Ascending aorta (tissue), 2 donors: ENCODE measurements at regions of chr12 and their contacts with region 1.

Region 1: GRCh38 chr12:62683776-62684569 is 217.3 kb downstream of the MON2 start:
- DNase-seq: peak in 1 of 2 donors; percentile 78
- H3K4me3 ChIP-seq: no peak overlapping the region
- H3K27ac ChIP-seq: peak overlapping the region; percentile 79 to 85
- H3K4me1 ChIP-seq: peaks cover 6 to 23% of the 10 kb centered on the region in 2 donors
- H3K27me3 ChIP-seq: no peaks in the 10 kb centered on the region
- CTCF ChIP-seq: no peak

Region 2: DNA sequence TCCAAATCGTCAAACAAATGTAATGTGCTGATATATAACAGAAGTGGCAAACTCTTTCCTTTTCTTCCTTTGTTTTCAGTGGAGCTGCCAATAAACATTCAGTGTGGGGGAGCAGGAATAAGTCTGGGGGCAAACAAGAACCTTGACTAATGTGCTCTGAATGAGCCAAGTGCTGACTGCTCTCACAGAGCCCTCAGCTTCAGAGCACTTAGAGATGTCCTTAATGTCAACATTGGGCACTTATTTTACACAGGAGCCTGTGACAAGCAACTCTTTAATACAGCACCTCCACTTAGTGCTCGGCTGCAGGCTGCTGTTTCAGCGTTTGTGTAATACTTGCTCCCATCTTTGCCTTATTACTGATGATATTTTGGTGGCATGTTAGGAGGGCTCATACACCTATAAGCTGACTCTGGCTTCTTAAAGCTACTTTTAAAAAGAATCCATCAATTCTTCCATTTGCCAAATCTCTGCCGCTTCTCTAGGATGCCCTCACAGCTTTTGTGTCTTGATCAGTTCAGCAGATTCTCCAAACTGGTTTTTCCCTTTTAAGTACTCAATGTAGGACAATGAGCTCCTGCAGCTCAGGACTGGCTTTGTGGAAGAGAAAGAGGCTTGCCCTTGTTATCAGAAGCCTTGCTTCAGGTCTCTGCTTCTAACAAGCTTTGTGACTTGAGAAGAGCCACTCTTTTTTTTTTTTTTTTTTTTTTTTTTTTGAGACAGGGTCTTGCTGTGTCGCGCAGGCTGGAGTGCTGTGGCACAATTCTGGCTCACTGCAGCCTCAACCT is 10.8 kb before region 1 on chr12:
- intact Hi-C with region 1: no loop called
- DNase-seq: no peak
- H3K4me3 ChIP-seq: no peak overlapping the region
- H3K27ac ChIP-seq: no peak overlapping the region
- H3K4me1 ChIP-seq: no peaks in the 10 kb centered on the region
- H3K27me3 ChIP-seq: no peaks in the 10 kb centered on the region
- CTCF ChIP-seq: no peak

Region 3: GRCh38 chr12:62703011-62703380 is 19.0 kb after region 1 on chr12:
- intact Hi-C with region 1: loop called (anchors 2 kb)
- DNase-seq: no peak
- H3K4me3 ChIP-seq: no peak overlapping the region
- H3K27ac ChIP-seq: peak overlapping the region; percentile 62 to 84
- H3K4me1 ChIP-seq: peaks cover 12 to 22% of the 10 kb centered on the region in 2 donors
- H3K27me3 ChIP-seq: no peaks in the 10 kb centered on the region
- CTCF ChIP-seq: no peak

Region 4: DNA sequence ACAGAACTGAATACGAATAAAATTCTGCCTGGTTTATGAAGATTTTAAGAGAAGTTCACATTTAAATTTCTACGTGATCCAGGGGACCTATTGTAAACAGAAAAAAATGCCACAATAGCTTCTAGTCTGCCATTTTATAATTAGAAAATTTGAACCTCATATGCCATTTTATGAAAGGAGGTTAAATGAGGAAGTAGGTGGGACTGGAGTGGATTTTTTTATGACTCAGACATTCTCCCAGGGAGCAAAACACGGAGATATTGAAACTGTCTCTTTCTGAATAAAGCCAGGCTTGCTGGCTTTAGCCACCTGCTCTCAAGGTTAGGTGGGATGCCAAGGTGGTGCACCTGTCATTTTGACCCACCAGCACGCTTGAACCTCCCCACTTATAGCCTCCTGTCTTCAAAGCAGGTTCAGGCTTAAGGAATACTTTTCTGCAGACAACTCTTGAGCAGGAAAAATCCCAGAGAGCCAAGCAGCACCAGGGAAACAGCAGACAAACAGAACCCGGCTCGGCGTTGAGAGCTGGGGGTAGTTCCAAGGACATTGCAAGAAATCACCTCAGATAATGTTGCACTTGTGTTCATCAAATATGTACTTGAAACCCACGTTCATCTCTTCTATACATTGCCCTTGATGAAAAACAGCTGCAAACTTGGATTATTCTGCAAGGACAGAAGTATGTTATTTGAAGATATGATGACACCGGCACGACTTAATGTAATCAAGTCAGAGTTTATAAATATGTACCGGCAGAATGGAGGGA is 47.3 kb after region 1 on chr12:
- intact Hi-C with region 1: loop called (anchors 2 kb)
- DNase-seq: no peak
- H3K4me3 ChIP-seq: peak overlapping the region; percentile 24 to 54
- H3K27ac ChIP-seq: peak overlapping the region; percentile 54 to 72
- H3K4me1 ChIP-seq: peaks cover 0 to 15% of the 10 kb centered on the region in 2 donors
- H3K27me3 ChIP-seq: no peaks in the 10 kb centered on the region
- CTCF ChIP-seq: no peak